BJ (cell line): ENCODE measurements at regions of chr13 and their contacts with region 1.

Region 1: GRCh38 chr13:97221989-97222700 is at the start of gene MBNL2:
- DNase-seq: peak; percentile 73
- H3K4me3 ChIP-seq: peak within 1 kb of the TSS; percentile 76
- H3K27me3 ChIP-seq: no peaks in the 10 kb centered on the region
- CTCF ChIP-seq: no peak
- polyA plus RNA-seq, gene MBNL2: 27.4 and 45.5 TPM in 2 replicates

Region 2: GRCh38 chr13:97249796-97250495 is 27.8 kb after region 1 on chr13:
- CTCF ChIA-PET with region 1: interaction called, 6 read pairs
- POLR2A ChIA-PET with region 1: interaction called, 10 read pairs
- DNase-seq: no peak
- H3K4me3 ChIP-seq: no peak overlapping the region
- H3K27me3 ChIP-seq: no peaks in the 10 kb centered on the region
- CTCF ChIP-seq: no peak

Region 3: GRCh38 chr13:97344265-97345175 is 122.4 kb after region 1 on chr13:
- CTCF ChIA-PET with region 1: interaction called, 20 read pairs
- POLR2A ChIA-PET with region 1: no interaction called
- DNase-seq: no peak
- H3K4me3 ChIP-seq: no peak overlapping the region
- H3K27me3 ChIP-seq: no peaks in the 10 kb centered on the region
- CTCF ChIP-seq: peak; percentile 74